Activated B cell treated with CpG ODN at 0.5 μM for 24 hours (primary cell): ENCODE measurements at regions of chr1 and their contacts with region 1.

Region 1: DNA sequence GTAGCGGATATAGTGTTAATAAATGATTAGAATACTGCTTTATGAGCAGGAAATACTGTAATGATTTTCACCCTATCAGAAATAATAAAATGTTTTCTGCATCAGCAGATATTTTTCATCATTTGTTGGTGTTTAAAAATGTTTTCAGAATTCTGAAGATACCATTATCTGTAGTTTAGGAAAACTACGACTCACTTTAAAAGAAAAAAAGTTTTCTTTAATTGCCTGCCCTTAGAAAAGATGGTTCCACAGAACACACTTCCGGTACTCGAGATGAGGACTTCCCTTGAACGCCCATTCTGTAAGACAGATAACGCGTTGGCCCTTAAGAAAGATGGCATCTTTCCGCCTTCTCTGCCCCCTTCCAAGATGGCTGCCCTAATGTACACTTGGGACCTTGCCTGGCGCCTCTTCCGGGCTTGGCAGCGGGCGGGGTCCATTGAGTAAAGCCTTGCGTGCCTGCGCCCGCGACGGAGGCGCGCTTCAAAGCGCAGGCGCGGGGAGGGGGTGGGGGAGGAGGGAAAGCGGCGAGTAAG is at the start of gene SZRD1:
- DNase-seq: peak; percentile 84
- ATAC-seq: peak; percentile 83
- H3K4me3 Mint-ChIP-seq: peak within 1 kb of the TSS; percentile 99
- H3K27ac Mint-ChIP-seq: peak within 1 kb of the TSS; percentile 99
- H3K4me1 Mint-ChIP-seq: peaks cover 38% of the 10 kb centered on the region
- H3K27me3 Mint-ChIP-seq: no peaks in the 10 kb centered on the region
- CTCF ChIP-seq: no peak
- total RNA-seq, gene SZRD1: 184 and 190 TPM in 2 replicates

Region 2: GRCh38 chr1:15684468-15685291 is 682.1 kb before region 1 on chr1:
- CTCF ChIA-PET with region 1: no interaction called
- POLR2A ChIA-PET with region 1: no interaction called
- intact Hi-C with region 1: loop called (anchors 10 kb)
- DNase-seq: peak; percentile 46
- ATAC-seq: peak; percentile 6
- H3K4me3 Mint-ChIP-seq: peak overlapping the region; percentile 88
- H3K27ac Mint-ChIP-seq: peak overlapping the region; percentile 81
- H3K4me1 Mint-ChIP-seq: peaks cover 70% of the 10 kb centered on the region
- H3K27me3 Mint-ChIP-seq: no peaks in the 10 kb centered on the region
- CTCF ChIP-seq: no peak

Region 3: GRCh38 chr1:16236511-16237342 is 130.1 kb before region 1 on chr1 and contains the start of gene CPLANE2:
- CTCF ChIA-PET with region 1: interaction called, 3 read pairs
- POLR2A ChIA-PET with region 1: interaction called, 7 read pairs
- intact Hi-C with region 1: loop called (anchors 1 kb)
- DNase-seq: peak; percentile 97
- ATAC-seq: peak; percentile 82
- H3K4me3 Mint-ChIP-seq: peak within 1 kb of the TSS; percentile 90
- H3K27ac Mint-ChIP-seq: peak within 1 kb of the TSS; percentile 95
- H3K4me1 Mint-ChIP-seq: peaks cover 12% of the 10 kb centered on the region
- H3K27me3 Mint-ChIP-seq: no peaks in the 10 kb centered on the region
- CTCF ChIP-seq: no peak
- total RNA-seq, gene CPLANE2: 5.0 and 5.1 TPM in 2 replicates

Region 4: DNA sequence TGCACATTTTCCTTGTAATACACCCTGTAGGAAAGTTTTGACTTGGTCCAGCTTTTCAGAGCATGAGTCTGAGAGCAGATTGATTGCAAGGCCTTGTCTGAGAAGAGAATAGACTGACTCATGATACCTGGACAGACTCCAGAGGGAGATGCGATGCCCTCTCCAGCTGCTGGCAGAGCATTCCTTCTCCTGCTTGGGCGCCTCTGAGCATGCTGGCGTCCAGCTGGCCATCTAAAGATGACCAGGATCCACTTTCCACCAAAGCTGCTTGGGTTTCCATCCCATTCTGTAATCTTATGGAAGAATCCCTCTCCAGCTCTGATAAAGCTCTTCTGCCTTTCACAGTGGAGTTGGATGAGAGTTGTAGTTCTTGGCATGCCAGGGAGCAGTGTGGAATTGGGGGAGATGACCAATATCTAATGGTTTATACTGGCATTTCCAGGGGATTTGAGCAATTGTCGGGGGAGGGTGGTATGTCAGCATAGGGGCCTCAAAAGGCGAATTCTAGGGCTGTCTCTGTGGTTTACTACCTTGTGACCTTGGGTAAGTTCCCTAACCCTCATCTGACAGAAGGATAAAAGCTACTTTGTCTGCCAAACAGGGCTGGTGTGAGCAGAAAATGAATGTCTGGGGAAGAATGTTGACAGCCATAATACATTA is 19.8 kb after region 1 on chr1:
- CTCF ChIA-PET with region 1: interaction called, 6 read pairs
- POLR2A ChIA-PET with region 1: interaction called, 49 read pairs
- intact Hi-C with region 1: loop called (anchors 1 kb)
- DNase-seq: no peak
- ATAC-seq: peak; percentile 23
- H3K4me3 Mint-ChIP-seq: peak overlapping the region; percentile 73
- H3K27ac Mint-ChIP-seq: peak overlapping the region; percentile 92
- H3K4me1 Mint-ChIP-seq: peaks cover 79% of the 10 kb centered on the region
- H3K27me3 Mint-ChIP-seq: no peaks in the 10 kb centered on the region
- CTCF ChIP-seq: no peak

Region 5: GRCh38 chr1:16440470-16441281 is 73.9 kb after region 1 on chr1 and contains the start of gene NECAP2:
- CTCF ChIA-PET with region 1: interaction called, 5 read pairs
- POLR2A ChIA-PET with region 1: interaction called, 27 read pairs
- intact Hi-C with region 1: loop called (anchors 1 kb)
- DNase-seq: peak; percentile 91
- ATAC-seq: peak; percentile 91
- H3K4me3 Mint-ChIP-seq: peak within 1 kb of the TSS; percentile 94
- H3K27ac Mint-ChIP-seq: peak within 1 kb of the TSS; percentile 91
- H3K4me1 Mint-ChIP-seq: peaks cover 30% of the 10 kb centered on the region
- H3K27me3 Mint-ChIP-seq: no peaks in the 10 kb centered on the region
- CTCF ChIP-seq: peak; percentile 92
- total RNA-seq, gene NECAP2: 85.5 and 88.4 TPM in 2 replicates

Region 6: DNA sequence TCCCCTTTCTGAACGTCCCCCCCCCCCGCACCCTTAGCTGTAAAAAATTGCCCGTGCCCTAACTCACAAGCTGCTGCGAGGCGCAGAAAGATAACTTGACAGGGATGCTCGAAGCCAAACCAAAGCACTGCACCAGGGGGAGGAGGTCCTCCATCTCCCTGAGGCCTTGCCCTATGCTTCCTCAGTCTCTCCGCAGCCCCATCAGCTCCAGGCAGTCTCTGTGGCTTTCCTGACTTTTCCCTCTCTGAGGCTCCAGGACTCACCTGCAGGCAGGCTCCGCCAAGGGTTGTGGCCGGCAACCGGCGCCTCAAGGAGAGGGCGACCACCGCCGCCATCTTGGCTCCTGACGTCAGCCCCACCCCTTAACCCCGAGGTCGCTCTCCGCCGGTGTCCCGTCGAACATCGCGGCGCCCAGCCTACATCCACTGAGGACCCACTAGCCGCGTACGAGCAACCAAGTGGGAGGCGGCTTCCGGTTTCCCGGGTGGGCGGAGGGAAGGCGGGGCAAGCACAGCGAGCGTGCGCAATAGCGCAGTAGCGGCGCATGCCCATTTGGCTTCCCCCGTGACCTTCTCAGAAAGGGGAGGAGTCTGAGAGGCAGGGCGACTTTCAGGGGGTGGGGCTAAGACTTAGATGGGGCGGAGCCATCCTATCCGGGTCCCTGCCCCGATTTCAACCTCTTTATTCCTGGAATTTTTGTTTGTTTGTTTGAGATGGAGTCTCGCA is 687.1 kb after region 1 on chr1 and contains the start of gene SDHB:
- CTCF ChIA-PET with region 1: no interaction called
- POLR2A ChIA-PET with region 1: no interaction called
- intact Hi-C with region 1: loop called (anchors 5 kb)
- DNase-seq: peak; percentile 100
- ATAC-seq: peak; percentile 98
- H3K4me3 Mint-ChIP-seq: peak within 1 kb of the TSS; percentile 99
- H3K27ac Mint-ChIP-seq: peak within 1 kb of the TSS; percentile 94
- H3K4me1 Mint-ChIP-seq: peaks cover 25% of the 10 kb centered on the region
- H3K27me3 Mint-ChIP-seq: peaks cover 6% of the 10 kb centered on the region
- CTCF ChIP-seq: no peak
- total RNA-seq, gene SDHB: 70.7 and 78.3 TPM in 2 replicates